Prostate gland (tissue), 2 donors: ENCODE measurements at regions of chr6 and their contacts with region 1.

Region 1: GRCh38 chr6:11653028-11653583 is 115.6 kb downstream of the TMEM170B start:
- DNase-seq: no peak
- H3K4me3 ChIP-seq: no peak overlapping the region
- H3K27ac ChIP-seq: no peak overlapping the region
- H3K4me1 ChIP-seq: no peaks in the 10 kb centered on the region
- H3K27me3 ChIP-seq: no peaks in the 10 kb centered on the region
- CTCF ChIP-seq: no peak
- POLR2A ChIP-seq: no peak

Region 2: DNA sequence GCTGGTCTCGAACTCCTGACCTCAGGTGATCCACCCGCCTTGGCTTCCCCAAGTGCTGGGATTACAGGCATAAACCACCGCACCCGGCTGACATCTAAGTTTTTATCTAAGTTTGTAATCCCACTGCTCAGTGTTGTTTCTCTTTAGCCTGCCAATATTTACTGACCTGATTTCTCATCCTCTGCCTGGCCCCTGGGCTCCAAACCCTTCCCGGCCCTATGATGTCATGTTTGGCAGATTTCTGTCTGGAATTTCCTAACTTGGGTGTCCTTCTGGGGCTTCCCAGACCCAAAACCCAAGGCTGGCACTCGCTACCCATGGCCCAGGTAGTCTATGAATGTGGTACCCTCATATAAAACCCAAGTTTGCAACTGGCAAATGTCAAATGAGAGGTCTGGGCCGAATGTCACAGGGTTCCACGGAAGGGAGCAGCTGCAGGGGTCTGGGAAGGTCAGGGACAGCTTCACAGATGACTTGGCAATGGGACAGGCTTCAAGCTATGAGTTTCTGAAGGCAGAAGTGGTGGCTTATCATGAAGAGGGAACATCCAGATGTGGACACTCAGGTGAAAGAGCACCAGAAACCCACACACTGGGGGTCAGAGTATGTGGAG is 60.7 kb before region 1 on chr6:
- intact Hi-C with region 1: loop called (anchors 5 kb)
- DNase-seq: no peak
- H3K4me3 ChIP-seq: no peak overlapping the region
- H3K27ac ChIP-seq: no peak overlapping the region
- H3K4me1 ChIP-seq: no peaks in the 10 kb centered on the region
- H3K27me3 ChIP-seq: no peaks in the 10 kb centered on the region
- CTCF ChIP-seq: no peak
- POLR2A ChIP-seq: no peak

Region 3: GRCh38 chr6:12233693-12234571 is 580.8 kb after region 1 on chr6:
- intact Hi-C with region 1: loop called (anchors 2 kb)
- DNase-seq: peak; percentile 71
- H3K4me3 ChIP-seq: no peak overlapping the region
- H3K27ac ChIP-seq: no peak overlapping the region
- H3K4me1 ChIP-seq: no peaks in the 10 kb centered on the region
- H3K27me3 ChIP-seq: no peaks in the 10 kb centered on the region
- CTCF ChIP-seq: peak; percentile 40 to 93 (median 86)
- POLR2A ChIP-seq: no peak

Region 4: DNA sequence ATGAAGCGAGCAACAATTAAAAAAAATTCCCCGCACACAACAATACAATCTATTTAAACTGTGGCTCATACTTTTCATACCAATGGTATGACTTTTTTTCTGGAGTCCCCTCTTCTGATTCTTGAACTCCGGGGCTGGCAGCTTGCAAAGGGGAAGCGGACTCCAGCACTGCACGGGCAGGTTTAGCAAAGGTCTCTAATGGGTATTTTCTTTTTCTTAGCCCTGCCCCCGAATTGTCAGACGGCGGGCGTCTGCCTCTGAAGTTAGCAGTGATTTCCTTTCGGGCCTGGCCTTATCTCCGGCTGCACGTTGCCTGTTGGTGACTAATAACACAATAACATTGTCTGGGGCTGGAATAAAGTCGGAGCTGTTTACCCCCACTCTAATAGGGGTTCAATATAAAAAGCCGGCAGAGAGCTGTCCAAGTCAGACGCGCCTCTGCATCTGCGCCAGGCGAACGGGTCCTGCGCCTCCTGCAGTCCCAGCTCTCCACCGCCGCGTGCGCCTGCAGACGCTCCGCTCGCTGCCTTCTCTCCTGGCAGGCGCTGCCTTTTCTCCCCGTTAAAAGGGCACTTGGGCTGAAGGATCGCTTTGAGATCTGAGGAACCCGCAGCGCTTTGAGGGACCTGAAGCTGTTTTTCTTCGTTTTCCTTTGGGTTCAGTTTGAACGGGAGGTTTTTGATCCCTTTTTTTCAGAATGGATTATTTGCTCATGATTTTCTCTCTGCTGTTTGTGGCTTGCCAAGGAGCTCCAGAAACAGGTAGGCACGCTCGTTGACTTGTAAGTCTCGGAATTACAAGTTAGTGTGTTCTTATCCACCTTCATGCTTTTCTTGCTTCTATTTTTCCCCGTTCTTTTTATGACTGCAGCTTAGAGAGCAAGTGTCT is 637.1 kb after region 1 on chr6 and contains the start of gene EDN1:
- intact Hi-C with region 1: loop called (anchors 10 kb)
- DNase-seq: peak; percentile 84
- H3K4me3 ChIP-seq: peak within 1 kb of the TSS; percentile 28 to 30
- H3K27ac ChIP-seq: peak within 1 kb of the TSS; percentile 59 to 66
- H3K4me1 ChIP-seq: no peaks in the 10 kb centered on the region
- H3K27me3 ChIP-seq: no peaks in the 10 kb centered on the region
- CTCF ChIP-seq: peak in 3 of 4 experiments; percentile 13 to 59 (median 55)
- POLR2A ChIP-seq: peak; percentile 62
- total RNA-seq, gene EDN1: 15.6 to 20.4 TPM

Region 5: GRCh38 chr6:12605888-12606345 is 952.8 kb after region 1 on chr6:
- intact Hi-C with region 1: loop called (anchors 10 kb)
- DNase-seq: peak; percentile 67
- H3K4me3 ChIP-seq: no peak overlapping the region
- H3K27ac ChIP-seq: no peak overlapping the region
- H3K4me1 ChIP-seq: no peaks in the 10 kb centered on the region
- H3K27me3 ChIP-seq: no peaks in the 10 kb centered on the region
- CTCF ChIP-seq: peak; percentile 35 to 75 (median 57)
- POLR2A ChIP-seq: no peak